MCF 10A (cell line): ENCODE measurements at regions of chr12 and their contacts with region 1.

Region 1: GRCh38 chr12:50132505-50133135 is 20.6 kb downstream of the COX14 start:
- DNase-seq: peak; percentile 62
- H3K4me3 Mint-ChIP-seq: no peak overlapping the region
- H3K27ac Mint-ChIP-seq: no peak overlapping the region
- H3K4me1 Mint-ChIP-seq: peaks cover 4% of the 10 kb centered on the region
- H3K27me3 Mint-ChIP-seq: no peaks in the 10 kb centered on the region
- CTCF ChIP-seq: peak; percentile 48

Region 2: GRCh38 chr12:49937639-49938300 is 194.8 kb before region 1 on chr12:
- CTCF ChIA-PET with region 1: no interaction called
- POLR2A ChIA-PET with region 1: no interaction called
- intact Hi-C with region 1: no loop called
- DNase-seq: no peak
- H3K4me3 Mint-ChIP-seq: no peak overlapping the region
- H3K27ac Mint-ChIP-seq: no peak overlapping the region
- H3K4me1 Mint-ChIP-seq: peaks cover 11% of the 10 kb centered on the region
- H3K27me3 Mint-ChIP-seq: no peaks in the 10 kb centered on the region
- CTCF ChIP-seq: no peak

Region 3: DNA sequence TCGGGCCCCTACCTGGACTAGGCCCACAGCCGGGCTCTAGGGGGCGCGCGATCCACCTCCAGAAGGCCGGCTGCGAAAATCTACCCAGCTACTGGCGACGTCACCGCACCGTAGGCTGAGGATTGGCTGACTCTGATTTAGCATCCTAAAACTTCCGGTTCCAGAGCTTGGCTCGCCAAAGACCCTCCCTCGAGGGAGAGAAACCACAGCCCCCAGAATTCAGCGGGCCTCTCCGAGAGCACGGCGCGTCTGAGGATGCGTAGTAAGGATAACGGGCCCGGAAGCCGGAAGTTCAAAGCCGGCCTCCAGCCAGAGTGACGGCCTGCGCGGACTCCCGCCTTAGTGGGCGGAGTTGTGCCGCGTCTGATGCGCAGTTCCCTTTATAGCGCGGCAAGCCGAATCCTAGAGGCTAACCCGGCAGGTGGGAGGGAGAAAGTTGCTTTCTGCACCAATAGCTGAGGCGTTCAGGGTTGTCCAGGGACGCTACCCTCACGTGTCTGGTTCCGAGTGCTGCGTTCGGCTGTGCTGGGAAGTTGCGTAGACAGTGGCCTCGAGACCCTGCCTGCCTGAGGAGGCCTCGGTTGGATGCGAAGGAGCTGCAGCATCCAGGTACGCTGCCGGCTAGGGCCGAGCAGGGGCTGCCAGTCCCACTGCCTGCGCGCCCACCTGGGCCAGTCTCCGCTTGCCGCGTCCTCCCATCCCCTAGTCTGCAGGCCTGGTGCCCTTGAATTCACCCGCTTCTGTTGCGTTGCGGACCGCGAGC is 20.7 kb before region 1 on chr12 and contains the start of gene COX14:
- CTCF ChIA-PET with region 1: interaction called, 48 read pairs
- POLR2A ChIA-PET with region 1: interaction called, 24 read pairs
- intact Hi-C with region 1: no loop called
- DNase-seq: peak; percentile 99
- H3K4me3 Mint-ChIP-seq: peak within 1 kb of the TSS; percentile 99
- H3K27ac Mint-ChIP-seq: peak within 1 kb of the TSS; percentile 93
- H3K4me1 Mint-ChIP-seq: peaks cover 12% of the 10 kb centered on the region
- H3K27me3 Mint-ChIP-seq: no peaks in the 10 kb centered on the region
- CTCF ChIP-seq: peak; percentile 80
- total RNA-seq, gene COX14: 43.6 and 45.2 TPM in 2 replicates

Region 4: DNA sequence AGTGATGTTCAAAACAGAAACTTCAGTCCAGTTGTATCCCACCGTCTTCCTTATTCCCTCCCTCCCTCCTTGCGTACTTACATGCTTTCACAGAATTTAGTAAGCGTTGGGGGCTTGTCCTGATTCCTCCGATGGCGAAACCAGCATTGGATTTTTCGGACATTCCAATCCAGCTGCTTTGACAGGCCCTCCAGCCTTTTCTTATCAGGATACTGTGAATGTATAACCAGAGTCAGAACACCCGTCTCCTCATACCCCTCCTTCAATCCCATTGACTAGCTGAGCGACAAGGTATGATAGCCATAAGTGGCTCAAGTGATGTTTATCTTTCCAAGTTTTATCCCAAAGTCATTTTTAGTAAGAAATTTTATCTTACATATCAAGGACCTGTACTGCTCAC is 10.4 kb after region 1 on chr12:
- CTCF ChIA-PET with region 1: interaction called, 15 read pairs
- POLR2A ChIA-PET with region 1: interaction called, 3 read pairs
- intact Hi-C with region 1: no loop called
- DNase-seq: no peak
- H3K4me3 Mint-ChIP-seq: no peak overlapping the region
- H3K27ac Mint-ChIP-seq: no peak overlapping the region
- H3K4me1 Mint-ChIP-seq: no peaks in the 10 kb centered on the region
- H3K27me3 Mint-ChIP-seq: no peaks in the 10 kb centered on the region
- CTCF ChIP-seq: no peak

Region 5: GRCh38 chr12:50167041-50167828 is 34.6 kb after region 1 on chr12 and contains the start of gene CERS5:
- CTCF ChIA-PET with region 1: interaction called, 25 read pairs
- POLR2A ChIA-PET with region 1: interaction called, 7 read pairs
- intact Hi-C with region 1: no loop called
- DNase-seq: peak; percentile 99
- H3K4me3 Mint-ChIP-seq: peak within 1 kb of the TSS; percentile 79
- H3K27ac Mint-ChIP-seq: peak within 1 kb of the TSS; percentile 79
- H3K4me1 Mint-ChIP-seq: peaks cover 12% of the 10 kb centered on the region
- H3K27me3 Mint-ChIP-seq: no peaks in the 10 kb centered on the region
- CTCF ChIP-seq: peak; percentile 9
- total RNA-seq, gene CERS5: 56.8 and 58.1 TPM in 2 replicates

Region 6: DNA sequence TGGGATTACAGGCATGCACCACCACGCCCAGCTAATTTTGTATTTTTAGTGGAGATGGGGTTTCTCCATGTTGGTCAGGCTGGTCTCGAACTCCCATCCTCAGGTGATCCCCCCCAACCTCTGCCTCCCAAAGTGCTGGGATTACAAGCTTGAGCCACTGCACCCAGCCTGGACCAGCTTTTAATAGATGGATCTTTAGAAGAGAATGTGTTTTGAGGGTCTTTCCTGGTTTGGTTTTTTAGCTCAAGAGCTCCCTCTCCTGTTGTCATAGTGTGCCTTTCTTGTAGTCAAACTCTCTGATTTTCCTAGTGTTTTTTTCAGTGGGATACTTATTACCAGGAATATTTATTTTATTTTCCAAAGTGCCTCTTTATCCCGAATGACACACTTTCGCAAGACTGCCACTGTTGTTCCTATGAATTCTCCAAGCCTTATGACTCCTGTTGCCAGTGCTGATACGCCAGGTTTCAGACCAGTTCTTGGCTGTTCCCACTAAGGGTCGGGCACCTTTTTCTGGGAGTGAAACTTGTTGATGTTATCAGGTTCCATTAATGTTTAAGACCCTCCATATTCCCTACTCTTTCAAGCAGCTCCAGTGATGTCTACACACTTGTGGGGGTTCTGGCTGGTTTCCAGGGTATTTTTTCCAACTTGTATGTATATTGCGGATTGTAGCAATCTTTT is 182.2 kb after region 1 on chr12:
- CTCF ChIA-PET with region 1: interaction called, 9 read pairs
- POLR2A ChIA-PET with region 1: no interaction called
- intact Hi-C with region 1: loop called (anchors 1 kb)
- DNase-seq: peak; percentile 39
- H3K4me3 Mint-ChIP-seq: no peak overlapping the region
- H3K27ac Mint-ChIP-seq: no peak overlapping the region
- H3K4me1 Mint-ChIP-seq: peaks cover 5% of the 10 kb centered on the region
- H3K27me3 Mint-ChIP-seq: no peaks in the 10 kb centered on the region
- CTCF ChIP-seq: peak; percentile 58

Region 7: DNA sequence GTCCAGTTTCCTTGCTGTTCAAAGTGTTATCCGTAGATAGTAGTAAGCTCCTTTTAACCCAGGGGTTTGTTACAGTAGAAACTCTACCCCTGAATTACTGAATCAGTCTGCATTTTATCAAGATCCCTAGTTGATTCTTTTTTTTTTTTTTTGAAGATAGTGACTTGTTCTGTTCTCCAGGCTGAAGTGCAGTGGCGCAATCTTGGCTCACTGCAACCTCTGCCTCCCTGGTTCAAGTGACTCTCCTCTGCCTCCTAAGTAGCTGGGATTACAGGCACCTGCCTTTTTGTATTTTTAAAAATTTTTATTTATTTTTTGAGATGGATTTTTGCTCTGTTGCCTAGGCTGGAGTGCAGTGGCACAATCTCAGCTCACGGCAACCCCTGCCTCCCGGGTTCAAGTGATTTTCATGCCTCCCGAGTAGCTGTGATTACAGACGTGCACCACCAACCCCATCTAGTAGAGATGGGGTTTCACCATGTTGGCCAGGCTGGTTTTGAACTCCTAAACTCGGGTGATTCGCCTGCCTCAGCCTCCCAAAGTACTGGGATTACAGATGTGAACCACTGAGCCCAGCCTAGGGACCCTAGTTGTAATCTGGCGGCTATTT is 278.5 kb after region 1 on chr12:
- CTCF ChIA-PET with region 1: no interaction called
- POLR2A ChIA-PET with region 1: no interaction called
- intact Hi-C with region 1: no loop called
- DNase-seq: peak; percentile 28
- H3K4me3 Mint-ChIP-seq: no peak overlapping the region
- H3K27ac Mint-ChIP-seq: no peak overlapping the region
- H3K4me1 Mint-ChIP-seq: no peaks in the 10 kb centered on the region
- H3K27me3 Mint-ChIP-seq: no peaks in the 10 kb centered on the region
- CTCF ChIP-seq: no peak